ENCODE measurements at regions of chr2 and their contacts with region 1.

Region 1: GRCh38 chr2:197777823-197778407 is 7.2 kb downstream of the BOLL start:
- DNase-seq: no peak
- ATAC-seq: no peak
- H3K4me3 ChIP-seq: no peak overlapping the region
- H3K27ac ChIP-seq: no peak overlapping the region
- H3K4me1 ChIP-seq: no peaks in the 10 kb centered on the region
- H3K27me3 ChIP-seq: no peaks in the 10 kb centered on the region
- CTCF ChIP-seq: peak; percentile 59 to 85 (median 74)
- POLR2A ChIP-seq: no peak

Region 2: GRCh38 chr2:197191177-197191939 is 586.6 kb before region 1 on chr2:
- intact Hi-C with region 1: loop called in 3 of 10 experiments (anchors 10 kb)
- DNase-seq: no peak
- ATAC-seq: no peak
- H3K4me3 ChIP-seq: no peak overlapping the region
- H3K27ac ChIP-seq: peak overlapping the region in 1 of 12 donors; percentile 18
- H3K4me1 ChIP-seq: peaks cover 0 to 24% (median 11%) of the 10 kb centered on the region in 12 donors
- H3K27me3 ChIP-seq: no peaks in the 10 kb centered on the region
- CTCF ChIP-seq: peak; percentile 55 to 80 (median 72)
- POLR2A ChIP-seq: no peak

Region 3: DNA sequence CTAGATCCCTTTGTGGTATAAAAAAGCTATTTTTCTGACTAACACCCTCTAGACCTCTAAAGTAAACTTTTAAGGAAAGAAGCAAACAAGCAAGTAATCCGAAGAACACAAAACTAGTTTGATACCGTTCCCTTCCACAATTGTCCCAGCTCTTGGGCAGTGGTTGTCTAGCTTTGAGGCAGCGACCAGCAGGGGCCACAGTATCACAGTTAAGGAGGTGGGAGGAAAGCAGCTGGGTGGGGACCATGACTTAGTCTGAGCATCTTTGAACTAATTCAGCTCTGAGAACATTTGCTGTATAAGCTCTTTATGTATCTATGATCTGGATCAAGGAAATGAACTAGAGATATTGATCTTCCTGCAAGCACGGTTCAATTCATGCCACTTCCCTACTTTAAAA is 394.1 kb before region 1 on chr2:
- intact Hi-C with region 1: loop called in 2 of 10 experiments (anchors 5 to 10 kb)
- DNase-seq: no peak
- ATAC-seq: no peak
- H3K4me3 ChIP-seq: no peak overlapping the region
- H3K27ac ChIP-seq: no peak overlapping the region
- H3K4me1 ChIP-seq: no peaks in the 10 kb centered on the region
- H3K27me3 ChIP-seq: no peaks in the 10 kb centered on the region
- CTCF ChIP-seq: no peak
- POLR2A ChIP-seq: no peak

Region 4: GRCh38 chr2:197388866-197389587 is 388.9 kb before region 1 on chr2:
- intact Hi-C with region 1: loop called in 2 of 10 experiments (anchors 5 to 10 kb)
- DNase-seq: no peak
- ATAC-seq: peak in 2 of 4 donors; percentile 12 to 24
- H3K4me3 ChIP-seq: no peak overlapping the region
- H3K27ac ChIP-seq: no peak overlapping the region
- H3K4me1 ChIP-seq: no peaks in the 10 kb centered on the region
- H3K27me3 ChIP-seq: no peaks in the 10 kb centered on the region
- CTCF ChIP-seq: no peak
- POLR2A ChIP-seq: no peak

Region 5: DNA sequence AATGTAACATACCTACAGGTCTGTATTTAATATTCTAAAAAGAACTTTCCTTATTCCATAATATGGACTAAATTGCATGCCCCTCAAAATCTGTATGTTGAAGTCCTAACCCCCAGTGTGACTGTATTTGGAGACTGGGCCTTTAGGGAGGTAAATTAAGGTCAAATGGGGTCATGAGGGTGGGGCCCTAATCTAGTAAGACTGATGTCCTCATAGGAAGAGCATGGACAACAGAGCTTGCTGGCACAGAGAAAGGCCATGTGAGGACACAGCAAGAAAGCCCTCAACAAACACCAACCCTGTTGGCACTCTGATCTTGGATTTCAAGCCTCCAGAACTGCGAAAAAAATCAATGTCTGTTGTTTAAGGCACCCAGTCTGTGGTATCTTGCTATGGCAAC is 361.6 kb before region 1 on chr2:
- intact Hi-C with region 1: loop called in 1 of 10 experiments (anchors 10 kb)
- DNase-seq: no peak
- ATAC-seq: no peak
- H3K4me3 ChIP-seq: no peak overlapping the region
- H3K27ac ChIP-seq: no peak overlapping the region
- H3K4me1 ChIP-seq: peaks cover 0 to 12% (median 2%) of the 10 kb centered on the region in 12 donors
- H3K27me3 ChIP-seq: no peaks in the 10 kb centered on the region
- CTCF ChIP-seq: no peak
- POLR2A ChIP-seq: no peak

Region 6: GRCh38 chr2:197499594-197500526 is 278.1 kb before region 1 on chr2 and contains the starts of genes HSPD1 and HSPE1:
- intact Hi-C with region 1: loop called in 3 of 10 experiments (anchors 2 to 10 kb)
- DNase-seq: peak; percentile 98 to 99 (median 99)
- ATAC-seq: peak; percentile 96 to 98 (median 97)
- H3K4me3 ChIP-seq: peak within 1 kb of the TSS; percentile 56 to 96 (median 81)
- H3K27ac ChIP-seq: peak within 1 kb of the TSS; percentile 79 to 99 (median 96)
- H3K4me1 ChIP-seq: peaks cover 8 to 61% (median 36%) of the 10 kb centered on the region in 12 donors
- H3K27me3 ChIP-seq: no peaks in the 10 kb centered on the region
- CTCF ChIP-seq: peak in 1 of 12 donors; percentile 14
- POLR2A ChIP-seq: peak; percentile 19 to 89
- total RNA-seq, gene HSPD1: 86.7 to 154 (median 118) TPM
- total RNA-seq, gene HSPE1: 75.0 to 136 (median 102) TPM

Measured in heart left ventricle (tissue), 16 donors.